K562 (cell line): ENCODE measurements at regions of chr17 and their contacts with region 1.

Region 1: DNA sequence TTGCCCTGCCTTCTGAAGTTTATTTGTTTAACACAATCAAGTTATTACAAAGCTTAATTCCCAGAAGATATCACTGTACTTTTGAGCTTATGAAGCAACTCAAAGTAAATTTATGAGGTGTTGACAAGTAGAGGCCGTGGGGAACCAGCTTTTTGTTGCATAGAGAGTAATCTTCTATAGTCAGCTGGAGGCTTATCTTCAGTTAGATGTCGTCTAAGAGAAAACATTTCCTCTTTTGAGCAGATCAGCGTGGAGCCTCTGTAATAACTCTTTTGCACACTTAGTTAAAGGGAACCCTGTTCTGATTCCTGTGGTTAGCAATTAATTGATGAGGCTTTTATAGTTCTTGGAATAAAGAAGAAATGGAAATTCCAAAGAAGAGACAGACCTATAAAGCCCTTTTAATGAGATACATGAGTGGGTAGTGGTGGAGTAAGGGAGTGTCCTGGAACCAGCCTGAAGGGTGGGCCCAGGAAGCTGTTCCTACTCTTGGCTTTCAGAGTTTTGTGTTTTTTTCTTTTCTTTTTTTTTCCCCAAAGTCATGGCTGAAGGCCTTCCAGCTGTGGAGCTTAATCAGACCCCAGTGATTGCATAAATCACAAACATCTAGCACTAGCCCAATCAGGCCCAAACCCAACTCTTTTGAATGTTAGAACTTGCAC is 28.9 kb upstream of the MAP3K14 start:
- DNase-seq: peak; percentile 48 to 93 (median 68)
- ATAC-seq: peak; percentile 88
- H3K4me3 ChIP-seq: no peak overlapping the region
- H3K27ac ChIP-seq: peak overlapping the region; percentile 38; the same call in 2 of the 3 replicates
- H3K4me1 ChIP-seq: peaks cover 32 to 42% of the 10 kb centered on the region in 2 experiments
- H3K27me3 ChIP-seq: no peaks in the 10 kb centered on the region
- CTCF ChIP-seq: no peak
- EP300 ChIP-seq: peak; percentile 99
- POLR2A ChIP-seq: no peak
- RAD21 ChIP-seq: peak in 1 of 2 experiments; percentile 9; a peak in 1 of 4 replicates

Region 2: GRCh38 chr17:45332989-45333701 is 12.5 kb before region 1 on chr17:
- CTCF ChIA-PET with region 1: no interaction called
- POLR2A ChIA-PET with region 1: interaction called, 12 read pairs
- in situ Hi-C with region 1: no loop called
- intact Hi-C with region 1: no loop called
- DNase-seq: peak; percentile 73 to 96 (median 84)
- ATAC-seq: peak; percentile 96
- H3K4me3 ChIP-seq: no peak overlapping the region
- H3K27ac ChIP-seq: peak overlapping the region; percentile 86
- H3K4me1 ChIP-seq: peaks cover 52% of the 10 kb centered on the region in 2 experiments
- H3K27me3 ChIP-seq: no peaks in the 10 kb centered on the region
- CTCF ChIP-seq: no peak
- EP300 ChIP-seq: peak; percentile 91
- POLR2A ChIP-seq: no peak
- RAD21 ChIP-seq: peak; percentile 30 to 38; a peak in 3 of 4 replicates

Region 3: DNA sequence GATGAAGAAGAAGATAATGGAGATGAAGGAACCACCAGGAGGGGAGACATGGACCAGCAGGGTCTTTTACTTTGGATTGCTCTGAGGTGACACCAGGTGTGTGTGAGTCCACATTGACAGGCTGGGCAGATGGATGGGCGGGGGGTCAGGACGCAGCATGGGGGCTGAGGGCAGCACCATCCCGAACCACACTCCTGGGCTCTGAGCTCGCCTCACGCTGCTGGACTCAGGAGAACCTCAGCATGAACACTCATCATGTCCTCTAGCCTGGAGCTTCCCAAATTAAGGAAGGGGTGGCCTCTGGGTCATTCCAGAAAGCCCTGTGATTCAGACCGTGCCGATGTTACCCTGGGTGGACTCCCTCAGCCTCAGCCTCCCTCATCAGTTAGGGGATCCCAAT is 21.5 kb after region 1 on chr17:
- CTCF ChIA-PET with region 1: no interaction called
- POLR2A ChIA-PET with region 1: interaction called, 11 read pairs
- in situ Hi-C with region 1: no loop called
- intact Hi-C with region 1: no loop called
- DNase-seq: no peak
- ATAC-seq: no peak
- H3K4me3 ChIP-seq: no peak overlapping the region
- H3K27ac ChIP-seq: no peak overlapping the region
- H3K4me1 ChIP-seq: peaks cover 0 to 14% of the 10 kb centered on the region in 2 experiments; a peak in 3 of 5 replicates
- H3K27me3 ChIP-seq: peaks cover 3 to 11% of the 10 kb centered on the region in 2 experiments; a peak in 3 of 5 replicates
- CTCF ChIP-seq: no peak
- EP300 ChIP-seq: no peak
- POLR2A ChIP-seq: no peak
- RAD21 ChIP-seq: no peak

Region 4: GRCh38 chr17:45385331-45385997 is 39.8 kb after region 1 on chr17:
- CTCF ChIA-PET with region 1: no interaction called
- POLR2A ChIA-PET with region 1: no interaction called
- in situ Hi-C with region 1: no loop called
- intact Hi-C with region 1: loop called (anchors 1 kb)
- DNase-seq: peak; percentile 85 to 92 (median 86)
- ATAC-seq: peak; percentile 99
- H3K4me3 ChIP-seq: no peak overlapping the region
- H3K27ac ChIP-seq: no peak overlapping the region
- H3K4me1 ChIP-seq: peaks cover 21 to 22% of the 10 kb centered on the region in 2 experiments
- H3K27me3 ChIP-seq: peaks cover 0 to 14% of the 10 kb centered on the region in 2 experiments; a peak in 3 of 5 replicates
- CTCF ChIP-seq: peak; percentile 96 to 99 (median 98)
- EP300 ChIP-seq: 0 out of 2 replicates have a peak, but pooled peaks have one; percentile 8
- POLR2A ChIP-seq: no peak
- RAD21 ChIP-seq: peak; percentile 99